ENCODE measurements at regions of chr15 and their contacts with region 1.

Region 1: GRCh38 chr15:77024271-77025082 is 29.6 kb downstream of the PSTPIP1 start:
- DNase-seq: peak; percentile 73 to 81
- ATAC-seq: peak in 2 of 3 donors; percentile 37 to 62
- H3K4me3 ChIP-seq: no peak overlapping the region
- H3K4me3 Mint-ChIP-seq: peak overlapping the region; percentile 83
- H3K27ac ChIP-seq: peak overlapping the region; percentile 83
- H3K27ac Mint-ChIP-seq: peak overlapping the region; percentile 96 to 99
- H3K4me1 ChIP-seq: peaks cover 70% of the 10 kb centered on the region
- H3K4me1 Mint-ChIP-seq: peaks cover 51 to 69% of the 10 kb centered on the region in 2 donors
- H3K27me3 ChIP-seq: no peaks in the 10 kb centered on the region
- H3K27me3 Mint-ChIP-seq: no peaks in the 10 kb centered on the region
- CTCF ChIP-seq: peak; percentile 97

Region 2: GRCh38 chr15:76905013-76905839 is 119.3 kb before region 1 on chr15 and contains the start of gene SCAPER:
- intact Hi-C with region 1: loop called (anchors 5 kb)
- DNase-seq: peak; percentile 85 to 95
- ATAC-seq: peak; percentile 88 to 94 (median 92)
- H3K4me3 ChIP-seq: peak within 1 kb of the TSS; percentile 87
- H3K4me3 Mint-ChIP-seq: peak within 1 kb of the TSS; percentile 94
- H3K27ac ChIP-seq: peak within 1 kb of the TSS; percentile 83
- H3K27ac Mint-ChIP-seq: peak within 1 kb of the TSS; percentile 88 to 95
- H3K4me1 ChIP-seq: peaks cover 14% of the 10 kb centered on the region
- H3K4me1 Mint-ChIP-seq: peaks cover 19 to 34% of the 10 kb centered on the region in 2 donors
- H3K27me3 ChIP-seq: no peaks in the 10 kb centered on the region
- H3K27me3 Mint-ChIP-seq: no peaks in the 10 kb centered on the region
- CTCF ChIP-seq: no peak
- total RNA-seq, gene SCAPER: 48.1 to 53.6 (median 51.8) TPM

Region 3: DNA sequence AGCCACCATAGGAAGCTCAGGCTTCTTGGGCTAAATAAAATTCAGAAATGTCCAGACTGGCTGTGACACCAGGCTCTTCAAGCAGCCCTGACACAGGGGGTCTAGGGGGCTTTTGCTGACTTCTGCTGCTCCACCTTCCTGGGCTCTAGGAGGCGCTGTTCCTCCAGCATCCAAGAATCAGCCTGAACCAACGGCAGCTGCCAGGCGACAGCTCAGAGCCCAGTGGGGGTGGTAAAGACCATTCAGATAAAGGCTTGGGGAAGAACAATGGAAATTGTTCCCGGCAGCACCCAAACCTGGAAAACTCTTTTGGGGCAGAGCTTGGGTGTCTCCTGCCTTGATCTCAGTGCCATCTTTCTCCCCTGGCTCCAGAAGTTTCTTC is 51.1 kb before region 1 on chr15:
- intact Hi-C with region 1: loop called (anchors 5 kb)
- DNase-seq: peak; percentile 66 to 86
- ATAC-seq: peak; percentile 68 to 82 (median 81)
- H3K4me3 ChIP-seq: no peak overlapping the region
- H3K4me3 Mint-ChIP-seq: no peak overlapping the region
- H3K27ac ChIP-seq: no peak overlapping the region
- H3K27ac Mint-ChIP-seq: no peak overlapping the region
- H3K4me1 ChIP-seq: peaks cover 23% of the 10 kb centered on the region
- H3K4me1 Mint-ChIP-seq: peaks cover 19 to 38% of the 10 kb centered on the region in 2 donors
- H3K27me3 ChIP-seq: no peaks in the 10 kb centered on the region
- H3K27me3 Mint-ChIP-seq: no peaks in the 10 kb centered on the region
- CTCF ChIP-seq: peak; percentile 82

Region 4: DNA sequence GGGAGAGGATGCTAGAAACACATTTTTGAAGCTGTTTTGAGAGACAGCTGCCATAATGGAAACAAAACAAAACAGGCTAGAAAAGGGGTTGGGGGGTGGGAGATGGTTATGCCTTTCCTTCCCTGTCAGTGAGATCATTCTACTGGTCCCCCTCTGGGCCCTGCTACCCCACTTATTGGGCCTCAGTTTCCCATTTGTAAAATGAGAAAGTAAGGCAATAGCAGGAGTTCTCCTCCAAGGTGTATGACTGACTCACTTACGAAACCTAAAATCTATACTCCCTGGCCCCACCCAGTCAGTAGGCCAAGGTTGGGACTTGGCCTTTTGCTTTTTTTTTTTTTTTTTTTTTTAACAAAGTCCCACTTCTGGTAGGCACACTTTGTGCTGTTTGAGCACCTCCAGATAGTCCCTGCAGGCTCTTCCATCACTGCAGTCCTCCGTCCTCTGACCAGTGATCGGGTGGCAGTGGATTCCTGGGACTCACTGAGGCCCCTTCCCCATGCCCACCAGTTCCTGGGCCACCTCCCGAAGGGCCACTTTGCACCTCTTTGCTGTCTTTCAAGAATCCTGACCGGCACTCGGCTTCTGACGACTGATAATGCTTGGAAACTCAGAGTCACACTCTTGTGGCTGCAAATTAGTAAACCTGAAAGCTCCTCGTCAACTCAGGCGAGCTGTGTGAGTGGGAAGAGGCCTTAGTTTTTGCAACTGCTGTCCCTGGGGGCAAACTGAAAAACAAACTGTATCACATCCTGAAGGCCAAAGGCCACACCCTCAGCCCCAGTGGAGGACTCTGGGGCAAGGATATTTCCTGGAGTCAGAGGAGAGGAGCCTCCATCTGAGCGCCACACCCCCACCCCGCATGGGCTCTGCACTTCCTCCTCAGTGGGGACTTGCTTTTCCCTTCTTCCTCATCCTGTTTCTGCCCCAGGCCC is 36.3 kb before region 1 on chr15:
- intact Hi-C with region 1: loop called (anchors 5 kb)
- DNase-seq: peak in 1 of 2 donors; percentile 36
- ATAC-seq: peak in 1 of 3 donors; percentile 27
- H3K4me3 ChIP-seq: no peak overlapping the region
- H3K4me3 Mint-ChIP-seq: no peak overlapping the region
- H3K27ac ChIP-seq: no peak overlapping the region
- H3K27ac Mint-ChIP-seq: no peak overlapping the region
- H3K4me1 ChIP-seq: peaks cover 38% of the 10 kb centered on the region
- H3K4me1 Mint-ChIP-seq: peaks cover 5 to 15% of the 10 kb centered on the region in 2 donors
- H3K27me3 ChIP-seq: no peaks in the 10 kb centered on the region
- H3K27me3 Mint-ChIP-seq: no peaks in the 10 kb centered on the region
- CTCF ChIP-seq: no peak

Region 5: DNA sequence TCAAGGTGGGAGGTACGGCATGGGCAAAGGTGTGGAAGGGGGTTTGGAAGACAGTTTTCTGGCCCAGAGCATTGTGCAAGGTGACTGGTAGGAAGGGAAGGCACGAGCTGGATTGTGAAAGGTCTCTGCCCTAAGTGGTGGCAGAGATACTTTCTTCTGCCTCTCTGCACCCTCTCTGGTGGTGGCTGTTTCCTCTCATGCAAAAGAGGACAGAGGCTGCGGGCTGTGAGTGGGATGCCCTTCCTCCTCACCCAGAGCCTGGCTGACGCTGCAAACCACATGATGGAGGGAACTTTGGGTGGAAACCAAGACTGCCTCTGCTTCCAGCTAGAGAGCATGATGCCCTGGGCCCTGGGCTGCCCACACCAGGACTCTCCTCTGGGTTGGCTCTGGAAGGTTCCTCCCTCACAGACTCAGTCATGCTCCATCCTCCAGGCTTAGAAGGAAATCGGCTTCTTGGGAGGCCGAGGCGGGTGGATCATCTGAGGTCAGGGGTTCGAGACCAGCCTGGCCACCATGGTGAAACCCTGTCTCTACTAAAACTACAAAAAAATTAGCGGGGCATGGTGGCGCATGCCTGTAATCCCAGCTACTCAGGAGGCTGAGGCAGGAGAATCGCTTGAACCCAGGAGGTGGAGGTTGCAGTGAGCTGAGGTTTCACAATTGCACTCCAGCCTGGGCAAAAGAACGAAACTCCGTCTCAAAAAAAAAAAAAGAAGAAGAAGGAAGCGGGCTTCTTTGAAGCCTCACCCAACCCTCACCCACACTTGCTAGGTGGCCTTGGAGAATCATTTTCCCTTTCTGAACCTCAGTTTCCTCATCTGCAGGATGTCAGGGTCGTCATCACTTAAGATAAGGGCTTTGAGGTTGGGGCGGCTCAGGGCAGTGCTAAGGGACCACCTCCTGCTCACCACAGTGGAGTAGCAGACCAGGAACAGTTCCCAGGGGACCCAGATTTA is 21.2 kb before region 1 on chr15:
- intact Hi-C with region 1: no loop called
- DNase-seq: peak; percentile 44 to 87
- ATAC-seq: peak; percentile 51 to 82 (median 78)
- H3K4me3 ChIP-seq: no peak overlapping the region
- H3K4me3 Mint-ChIP-seq: peak overlapping the region; percentile 82
- H3K27ac ChIP-seq: peak overlapping the region; percentile 83
- H3K27ac Mint-ChIP-seq: peak overlapping the region; percentile 92 to 95
- H3K4me1 ChIP-seq: peaks cover 86% of the 10 kb centered on the region
- H3K4me1 Mint-ChIP-seq: peaks cover 84% of the 10 kb centered on the region in 2 donors
- H3K27me3 ChIP-seq: no peaks in the 10 kb centered on the region
- H3K27me3 Mint-ChIP-seq: no peaks in the 10 kb centered on the region
- CTCF ChIP-seq: no peak

Region 6: DNA sequence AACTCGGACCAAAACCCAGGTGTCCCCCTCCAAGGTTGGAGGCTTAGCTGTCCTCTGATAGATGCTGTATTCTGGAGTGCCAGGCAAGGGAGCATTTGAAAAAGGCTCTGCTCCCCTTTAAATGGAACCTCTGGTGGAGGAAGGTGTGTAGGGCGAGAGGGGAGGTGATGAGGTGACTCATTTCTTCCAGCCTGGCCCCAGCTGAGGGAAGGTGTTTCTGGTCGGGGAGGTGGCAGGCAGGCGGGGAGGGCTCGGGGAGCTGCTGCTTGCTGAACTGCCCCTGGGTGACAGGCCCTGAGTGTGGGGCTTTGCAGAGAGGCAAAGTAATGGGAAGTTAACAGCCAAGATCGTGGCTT is 10.7 kb before region 1 on chr15:
- intact Hi-C with region 1: loop called (anchors 1 kb)
- DNase-seq: peak; percentile 78 to 88
- ATAC-seq: peak; percentile 68 to 80 (median 73)
- H3K4me3 ChIP-seq: peak overlapping the region; percentile 5
- H3K4me3 Mint-ChIP-seq: peak overlapping the region; percentile 90
- H3K27ac ChIP-seq: peak overlapping the region; percentile 84
- H3K27ac Mint-ChIP-seq: peak overlapping the region; percentile 96 to 99
- H3K4me1 ChIP-seq: peaks cover 99% of the 10 kb centered on the region
- H3K4me1 Mint-ChIP-seq: peaks cover 74 to 98% of the 10 kb centered on the region in 2 donors
- H3K27me3 ChIP-seq: no peaks in the 10 kb centered on the region
- H3K27me3 Mint-ChIP-seq: no peaks in the 10 kb centered on the region
- CTCF ChIP-seq: no peak

Region 7: DNA sequence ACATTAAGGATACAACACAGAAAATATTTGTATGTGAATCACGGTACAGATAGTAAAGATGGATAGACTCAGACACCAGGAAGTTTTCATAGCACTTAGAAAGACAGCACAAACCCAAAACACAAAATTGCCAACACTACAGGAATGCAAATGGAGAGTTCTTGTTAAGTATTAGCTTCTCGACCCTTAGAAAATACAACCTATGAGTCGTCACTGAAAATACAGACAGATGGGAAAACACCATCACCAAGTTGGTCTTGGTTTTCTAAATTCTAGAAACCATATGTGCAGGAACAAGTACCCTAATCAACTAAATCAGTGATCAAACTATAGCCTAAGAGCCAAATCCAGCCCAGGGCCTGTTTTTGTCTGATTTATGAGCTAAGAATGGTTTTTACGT is 344.7 kb after region 1 on chr15:
- intact Hi-C with region 1: no loop called
- DNase-seq: no peak
- ATAC-seq: no peak
- H3K4me3 ChIP-seq: no peak overlapping the region
- H3K4me3 Mint-ChIP-seq: no peak overlapping the region
- H3K27ac ChIP-seq: no peak overlapping the region
- H3K27ac Mint-ChIP-seq: no peak overlapping the region
- H3K4me1 ChIP-seq: no peaks in the 10 kb centered on the region
- H3K4me1 Mint-ChIP-seq: peaks cover 20 to 24% of the 10 kb centered on the region in 2 donors
- H3K27me3 ChIP-seq: no peaks in the 10 kb centered on the region
- H3K27me3 Mint-ChIP-seq: no peaks in the 10 kb centered on the region
- CTCF ChIP-seq: no peak

Region 8: GRCh38 chr15:77543159-77543882 is 518.8 kb after region 1 on chr15:
- intact Hi-C with region 1: loop called (anchors 5 kb)
- DNase-seq: peak; percentile 75 to 85
- ATAC-seq: peak; percentile 86 to 99 (median 97)
- H3K4me3 ChIP-seq: peak overlapping the region; percentile 58
- H3K4me3 Mint-ChIP-seq: peak overlapping the region; percentile 89
- H3K27ac ChIP-seq: no peak overlapping the region
- H3K27ac Mint-ChIP-seq: peak overlapping the region; percentile 34 to 77
- H3K4me1 ChIP-seq: peaks cover 14% of the 10 kb centered on the region
- H3K4me1 Mint-ChIP-seq: peaks cover 0 to 8% of the 10 kb centered on the region in 2 donors
- H3K27me3 ChIP-seq: no peaks in the 10 kb centered on the region
- H3K27me3 Mint-ChIP-seq: no peaks in the 10 kb centered on the region
- CTCF ChIP-seq: peak; percentile 90

Measured in natural killer cell (primary cell).